ENCODE measurements at regions of chr2 and their contacts with region 1.

Region 1: GRCh38 chr2:155223781-155224406 is 525.4 kb downstream of the KCNJ3 start:
- DNase-seq: no peak
- H3K4me3 ChIP-seq: no peak overlapping the region
- H3K27ac ChIP-seq: no peak overlapping the region
- H3K4me1 ChIP-seq: no peaks in the 10 kb centered on the region
- H3K27me3 ChIP-seq: no peaks in the 10 kb centered on the region
- CTCF ChIP-seq: peak in 2 of 3 experiments; percentile 27 to 47
- EP300 ChIP-seq: no peak
- POLR2A ChIP-seq: no peak

Region 2: DNA sequence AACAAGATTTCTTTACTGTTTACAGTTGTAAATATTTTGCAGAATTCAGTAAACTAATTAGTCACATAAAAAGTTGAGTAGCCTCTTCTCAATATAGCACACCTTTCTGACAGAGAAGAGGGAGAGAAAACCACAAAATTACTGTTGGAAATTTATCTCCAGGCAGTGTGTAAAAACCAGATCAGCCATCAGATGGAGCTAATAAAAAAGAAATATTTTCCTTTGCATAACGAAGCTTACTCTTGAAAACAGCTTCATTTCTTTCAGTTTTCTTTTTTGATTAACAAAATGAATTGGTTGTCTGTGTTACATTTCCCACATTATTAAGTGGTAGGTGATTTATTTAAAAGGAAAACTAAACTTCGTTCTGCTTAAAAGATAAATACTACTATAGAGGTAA is 784.7 kb before region 1 on chr2:
- intact Hi-C with region 1: loop called (anchors 10 kb)
- DNase-seq: no peak
- H3K4me3 ChIP-seq: no peak overlapping the region
- H3K27ac ChIP-seq: no peak overlapping the region
- H3K4me1 ChIP-seq: no peaks in the 10 kb centered on the region
- H3K27me3 ChIP-seq: no peaks in the 10 kb centered on the region
- CTCF ChIP-seq: peak in 2 of 3 experiments; percentile 13 to 27
- EP300 ChIP-seq: no peak
- POLR2A ChIP-seq: no peak

Region 3: DNA sequence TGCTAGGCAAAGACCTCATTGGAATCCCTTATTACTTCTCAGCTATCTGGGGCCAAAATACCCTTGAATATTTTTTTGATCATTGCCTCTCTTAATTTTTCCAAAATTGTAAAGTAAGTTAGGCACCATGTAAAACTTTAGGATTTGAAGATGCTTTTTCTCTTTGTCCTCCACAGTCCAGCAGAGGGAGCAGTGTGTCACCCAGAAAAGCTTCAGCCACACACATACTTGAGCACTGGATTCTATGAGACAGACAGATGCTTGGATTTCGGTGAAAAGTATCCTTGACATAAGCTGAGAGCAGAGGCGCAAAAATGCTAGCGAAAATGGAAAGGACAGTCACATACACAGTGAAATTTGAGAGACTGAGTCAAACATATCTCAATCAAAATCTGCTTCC is 600.1 kb before region 1 on chr2:
- intact Hi-C with region 1: loop called (anchors 10 kb)
- DNase-seq: no peak
- H3K4me3 ChIP-seq: no peak overlapping the region
- H3K27ac ChIP-seq: no peak overlapping the region
- H3K4me1 ChIP-seq: no peaks in the 10 kb centered on the region
- H3K27me3 ChIP-seq: no peaks in the 10 kb centered on the region
- CTCF ChIP-seq: peak; percentile 24 to 70 (median 58)
- EP300 ChIP-seq: no peak
- POLR2A ChIP-seq: no peak

Region 4: DNA sequence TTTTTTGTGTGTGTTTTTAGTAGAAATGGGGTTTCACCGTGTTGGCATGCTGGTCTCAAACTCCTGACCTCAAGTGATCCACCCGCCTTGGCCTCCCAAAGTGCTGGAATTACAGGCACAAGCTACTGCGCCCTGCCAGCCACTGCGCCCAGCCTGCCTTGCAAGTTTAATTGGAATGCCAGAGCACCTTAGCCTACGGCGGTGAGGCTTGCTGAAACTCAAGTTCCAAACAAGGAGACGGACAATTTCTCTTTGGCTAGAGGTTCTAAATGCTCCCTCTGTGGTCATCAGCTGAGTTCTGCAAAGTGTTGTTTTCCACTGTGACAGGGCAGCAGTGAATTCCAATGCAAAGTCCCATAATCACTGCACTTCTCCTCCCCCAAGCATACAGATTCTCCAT is 58.0 kb after region 1 on chr2:
- intact Hi-C with region 1: no loop called
- DNase-seq: no peak
- H3K4me3 ChIP-seq: no peak overlapping the region
- H3K27ac ChIP-seq: no peak overlapping the region
- H3K4me1 ChIP-seq: no peaks in the 10 kb centered on the region
- H3K27me3 ChIP-seq: no peaks in the 10 kb centered on the region
- CTCF ChIP-seq: no peak
- EP300 ChIP-seq: no peak
- POLR2A ChIP-seq: no peak

Region 5: DNA sequence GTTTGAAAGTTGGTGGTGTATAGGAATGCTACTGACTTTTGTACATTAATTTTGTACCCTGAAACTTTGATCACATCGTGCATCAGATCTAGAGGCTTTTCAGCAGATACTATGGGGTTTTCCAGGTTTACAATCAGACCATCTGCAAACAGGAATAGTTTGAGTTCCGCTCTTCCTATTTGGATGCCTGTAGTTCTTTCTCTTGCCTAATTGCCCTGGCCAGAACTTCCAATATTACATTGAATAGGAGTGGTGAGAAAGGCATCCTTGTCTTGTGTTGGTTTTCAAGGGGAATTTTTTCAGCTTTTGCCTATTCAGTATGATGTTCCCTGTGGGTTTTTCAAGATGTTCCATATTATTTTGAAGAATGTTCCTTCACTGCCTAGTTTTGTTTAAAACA is 108.1 kb after region 1 on chr2:
- intact Hi-C with region 1: no loop called
- DNase-seq: no peak
- H3K4me3 ChIP-seq: no peak overlapping the region
- H3K27ac ChIP-seq: no peak overlapping the region
- H3K4me1 ChIP-seq: no peaks in the 10 kb centered on the region
- H3K27me3 ChIP-seq: no peaks in the 10 kb centered on the region
- CTCF ChIP-seq: no peak
- EP300 ChIP-seq: no peak
- POLR2A ChIP-seq: no peak